K562 (cell line): ENCODE measurements at regions of chr1 and their contacts with region 1.

Region 1: DNA sequence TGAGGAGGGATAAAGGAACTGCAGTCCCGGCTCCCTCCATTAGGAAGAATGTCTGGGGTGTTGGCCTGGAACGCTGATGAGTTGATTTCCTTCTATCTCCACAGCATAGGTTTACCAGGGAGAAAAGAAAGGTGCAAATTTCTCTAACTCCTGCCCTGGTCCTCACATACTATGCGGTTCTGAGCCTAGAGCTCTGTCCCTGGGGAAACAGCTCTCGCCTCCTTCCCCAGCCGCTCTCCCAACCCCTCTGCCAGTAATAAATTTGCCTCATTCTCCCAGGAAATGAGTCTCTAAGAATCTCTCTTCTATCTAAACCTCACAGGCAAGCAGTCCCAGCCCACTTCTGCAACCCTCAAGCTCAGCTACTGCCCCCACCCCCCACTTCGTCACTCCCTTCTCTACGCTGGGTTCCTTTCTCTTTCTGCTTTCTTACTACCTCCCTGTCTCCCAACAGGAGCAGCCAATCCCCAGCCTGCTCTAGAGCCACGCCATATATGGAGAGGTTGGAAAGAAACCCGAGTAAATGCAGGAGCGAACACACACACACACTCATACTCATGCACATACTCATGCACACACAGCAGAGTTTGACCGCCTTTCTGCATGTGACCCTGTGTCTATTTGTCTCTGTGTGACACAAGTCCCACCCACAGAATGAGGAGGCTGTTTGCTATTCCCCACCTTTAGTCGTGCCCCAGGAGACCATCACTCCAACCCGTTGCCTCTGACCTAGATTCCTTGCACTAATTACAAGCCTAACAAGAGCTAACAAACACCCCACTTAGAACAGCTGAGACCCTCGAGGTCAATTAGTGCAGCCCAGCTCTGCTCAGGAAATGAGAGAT is 13.4 kb downstream of the PLEKHO1 start:
- DNase-seq: peak; percentile 83 to 95 (median 89)
- ATAC-seq: peak; percentile 93
- H3K4me3 ChIP-seq: peak overlapping the region; percentile 7; the same call in 1 of the 2 replicates
- H3K27ac ChIP-seq: peak overlapping the region; percentile 95
- H3K4me1 ChIP-seq: peaks cover 27 to 53% of the 10 kb centered on the region in 2 experiments
- H3K27me3 ChIP-seq: no peaks in the 10 kb centered on the region
- CTCF ChIP-seq: no peak
- EP300 ChIP-seq: peak; percentile 82
- POLR2A ChIP-seq: peak; percentile 83
- RAD21 ChIP-seq: 0 out of 4 replicates have a peak, but pooled peaks of 1 of the 2 experiments have one; percentile 13

Region 2: GRCh38 chr1:149899460-149900293 is 263.4 kb before region 1 on chr1 and contains the start of gene BOLA1:
- CTCF ChIA-PET with region 1: no interaction called
- POLR2A ChIA-PET with region 1: no interaction called
- in situ Hi-C with region 1: no loop called
- intact Hi-C with region 1: loop called (anchors 10 kb)
- DNase-seq: no peak
- ATAC-seq: peak; percentile 70
- H3K4me3 ChIP-seq: no peak within 1 kb of the TSS
- H3K27ac ChIP-seq: no peak within 1 kb of the TSS
- H3K4me1 ChIP-seq: peaks cover 0 to 10% of the 10 kb centered on the region in 2 experiments; a peak in 1 of 5 replicates
- H3K27me3 ChIP-seq: no peaks in the 10 kb centered on the region
- CTCF ChIP-seq: no peak
- EP300 ChIP-seq: no peak
- POLR2A ChIP-seq: no peak
- RAD21 ChIP-seq: no peak
- polyA plus RNA-seq, gene BOLA1: not detected

Region 3: GRCh38 chr1:150001415-150001814 is 161.7 kb before region 1 on chr1:
- CTCF ChIA-PET with region 1: no interaction called
- POLR2A ChIA-PET with region 1: no interaction called
- in situ Hi-C with region 1: no loop called
- intact Hi-C with region 1: no loop called
- DNase-seq: peak in 2 of 4 experiments; percentile 48 to 51
- ATAC-seq: peak; percentile 69
- H3K4me3 ChIP-seq: no peak overlapping the region
- H3K27ac ChIP-seq: no peak overlapping the region
- H3K4me1 ChIP-seq: peaks cover 5 to 15% of the 10 kb centered on the region in 2 experiments; a peak in 4 of 5 replicates
- H3K27me3 ChIP-seq: no peaks in the 10 kb centered on the region
- CTCF ChIP-seq: no peak
- EP300 ChIP-seq: peak; percentile 48; the same call in 1 of the 2 replicates
- POLR2A ChIP-seq: no peak
- RAD21 ChIP-seq: no peak

Region 4: GRCh38 chr1:150072959-150073358 is 90.1 kb before region 1 on chr1:
- CTCF ChIA-PET with region 1: interaction called, 32 read pairs
- POLR2A ChIA-PET with region 1: interaction called, 5 read pairs
- in situ Hi-C with region 1: loop called (anchors 5 kb)
- intact Hi-C with region 1: loop called (anchors 1 kb)
- DNase-seq: no peak
- ATAC-seq: peak; percentile 62
- H3K4me3 ChIP-seq: no peak overlapping the region
- H3K27ac ChIP-seq: no peak overlapping the region
- H3K4me1 ChIP-seq: peaks cover 0 to 15% of the 10 kb centered on the region in 2 experiments; a peak in 2 of 5 replicates
- H3K27me3 ChIP-seq: no peaks in the 10 kb centered on the region
- CTCF ChIP-seq: peak in 1 of 3 experiments; percentile 67; a peak in 4 of 6 replicates
- EP300 ChIP-seq: no peak
- POLR2A ChIP-seq: no peak
- RAD21 ChIP-seq: peak; percentile 69 to 79

Region 5: GRCh38 chr1:150141452-150141851 is 21.6 kb before region 1 on chr1:
- CTCF ChIA-PET with region 1: no interaction called
- POLR2A ChIA-PET with region 1: interaction called, 11 read pairs
- in situ Hi-C with region 1: no loop called
- intact Hi-C with region 1: no loop called
- DNase-seq: no peak
- ATAC-seq: no peak
- H3K4me3 ChIP-seq: no peak overlapping the region
- H3K27ac ChIP-seq: no peak overlapping the region
- H3K4me1 ChIP-seq: peaks cover 0 to 10% of the 10 kb centered on the region in 2 experiments; a peak in 3 of 5 replicates
- H3K27me3 ChIP-seq: no peaks in the 10 kb centered on the region
- CTCF ChIP-seq: no peak
- EP300 ChIP-seq: no peak
- POLR2A ChIP-seq: no peak
- RAD21 ChIP-seq: no peak

Region 6: DNA sequence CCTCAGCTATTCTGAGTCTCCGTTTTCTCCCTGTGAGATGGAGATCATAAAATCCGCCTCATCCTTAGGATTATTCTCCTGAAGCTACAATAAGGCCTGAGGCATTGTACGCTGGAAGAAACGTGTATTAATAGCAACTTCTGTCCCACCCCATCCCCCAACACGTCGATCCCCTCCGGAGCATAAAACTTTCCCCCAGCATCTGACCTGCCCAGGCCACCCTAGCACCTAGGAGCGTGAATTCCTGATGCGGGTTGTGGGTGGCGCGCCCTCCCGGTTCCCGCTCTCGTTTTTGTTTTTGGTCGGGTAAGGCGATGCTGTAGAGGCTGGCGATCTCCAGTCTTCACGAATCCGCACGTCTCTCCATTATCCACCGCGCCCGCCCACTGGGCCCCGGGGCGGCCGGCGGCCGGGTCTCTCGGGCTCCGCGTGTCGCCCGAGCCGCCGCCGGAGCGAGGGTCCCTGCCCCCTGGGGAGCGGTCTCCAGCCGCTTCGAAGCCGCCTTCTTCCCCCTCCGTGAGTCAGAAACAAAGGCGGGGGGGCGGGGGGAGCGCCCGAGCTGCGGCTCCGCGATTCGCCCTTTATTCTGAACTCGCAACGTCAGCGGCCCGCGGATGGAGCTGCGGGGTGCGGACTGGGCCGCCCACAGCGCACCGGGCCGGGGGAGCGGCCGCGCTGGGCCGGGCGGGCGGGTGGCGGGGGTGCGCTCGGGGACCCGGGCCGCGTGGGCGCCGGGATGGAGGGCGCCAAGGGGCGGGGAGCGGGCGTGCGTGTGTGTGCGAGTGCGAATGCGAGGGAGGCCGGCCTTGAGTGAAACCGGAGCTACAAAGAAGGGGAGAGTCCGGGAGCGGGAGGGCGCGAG is 13.6 kb before region 1 on chr1 and contains the start of gene PLEKHO1:
- CTCF ChIA-PET with region 1: interaction called, 3 read pairs
- POLR2A ChIA-PET with region 1: interaction called, 57 read pairs
- in situ Hi-C with region 1: no loop called
- intact Hi-C with region 1: no loop called
- DNase-seq: peak; percentile 80 to 87 (median 83)
- ATAC-seq: peak; percentile 79
- H3K4me3 ChIP-seq: peak within 1 kb of the TSS; percentile 53
- H3K27ac ChIP-seq: peak within 1 kb of the TSS; percentile 66; the same call in 1 of the 3 replicates
- H3K4me1 ChIP-seq: peaks cover 21 to 24% of the 10 kb centered on the region in 2 experiments
- H3K27me3 ChIP-seq: no peaks in the 10 kb centered on the region
- CTCF ChIP-seq: no peak
- EP300 ChIP-seq: no peak
- POLR2A ChIP-seq: no peak
- RAD21 ChIP-seq: no peak
- polyA plus RNA-seq, gene PLEKHO1: 0.39 to 0.52 TPM

Region 7: DNA sequence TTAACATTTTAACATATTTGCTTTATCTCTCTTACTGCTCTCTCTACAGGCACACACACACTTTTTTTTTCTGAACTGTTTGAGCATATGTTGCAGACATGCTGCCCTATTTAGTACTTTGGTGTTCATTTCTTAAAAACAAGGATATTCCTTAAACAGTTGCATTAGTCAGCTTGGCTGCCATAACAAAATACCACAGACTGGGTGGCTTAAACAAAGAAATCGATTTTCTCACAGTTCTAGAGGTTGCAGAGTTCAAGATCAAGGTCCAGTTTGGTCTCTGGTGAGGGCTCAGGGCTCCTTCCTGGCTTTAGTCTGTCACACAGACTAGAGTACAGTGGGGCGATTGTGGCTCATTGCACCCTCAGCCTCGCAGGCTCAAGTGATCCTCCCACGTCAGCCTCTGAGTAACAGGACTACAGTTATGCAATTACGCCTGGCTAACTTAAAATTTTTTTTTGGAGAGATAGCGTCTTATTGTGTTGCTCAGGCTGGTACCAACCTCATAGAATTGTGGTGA is 247.6 kb after region 1 on chr1:
- CTCF ChIA-PET with region 1: no interaction called
- POLR2A ChIA-PET with region 1: no interaction called
- in situ Hi-C with region 1: no loop called
- intact Hi-C with region 1: no loop called
- DNase-seq: no peak
- ATAC-seq: no peak
- H3K4me3 ChIP-seq: no peak overlapping the region
- H3K27ac ChIP-seq: no peak overlapping the region
- H3K4me1 ChIP-seq: no peaks in the 10 kb centered on the region; a peak in 2 of 5 replicates
- H3K27me3 ChIP-seq: no peaks in the 10 kb centered on the region
- CTCF ChIP-seq: no peak
- EP300 ChIP-seq: no peak
- POLR2A ChIP-seq: no peak
- RAD21 ChIP-seq: no peak